ENCODE measurements at regions of chrX and their contacts with region 1.

Region 1: DNA sequence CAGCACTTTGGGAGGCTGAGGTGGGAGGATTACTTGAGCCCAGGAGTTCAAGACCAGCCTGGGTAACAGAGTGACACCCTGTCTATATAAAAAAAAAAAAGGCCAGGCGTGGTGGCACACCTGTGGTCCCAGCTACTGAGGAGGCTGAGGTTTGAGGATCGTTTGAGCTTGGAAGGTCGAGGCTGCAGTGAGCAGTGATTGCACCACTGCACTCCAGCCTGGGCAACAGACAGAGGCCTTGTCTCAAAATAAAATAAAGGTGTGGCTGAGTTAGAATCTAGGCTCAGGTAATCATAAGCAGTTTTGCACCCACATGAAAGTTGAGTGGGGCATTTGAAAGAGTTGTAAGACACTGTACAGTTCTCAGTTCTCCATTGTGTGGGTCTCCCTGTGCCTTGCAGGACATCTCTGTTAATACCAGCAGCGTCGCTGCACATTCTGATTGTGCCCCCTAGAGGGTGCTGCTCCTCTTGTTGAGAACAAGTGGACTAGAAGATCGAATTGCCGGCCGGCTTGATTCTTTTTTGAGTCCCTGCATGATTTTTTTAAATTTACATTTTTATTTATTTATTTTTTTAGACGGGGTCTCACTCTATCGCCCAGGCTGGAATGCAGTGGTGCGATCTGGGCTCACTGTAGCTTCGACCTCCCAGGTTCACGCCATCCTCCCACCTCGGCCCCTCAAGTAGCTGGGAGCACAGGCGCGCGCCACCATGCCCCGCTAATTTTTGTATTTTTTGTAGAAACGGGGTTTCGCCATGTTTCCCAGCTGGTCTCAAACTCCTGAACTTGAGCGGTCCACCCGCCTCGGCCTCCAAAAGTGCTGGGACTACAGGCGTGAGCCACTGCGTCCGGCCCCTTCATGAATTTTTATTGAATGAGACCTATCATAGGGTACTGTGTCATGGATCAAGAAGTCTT is 73.6 kb upstream of the RBMX start:
- DNase-seq: peak; percentile 25
- H3K4me3 Mint-ChIP-seq: no peak overlapping the region
- H3K27ac Mint-ChIP-seq: no peak overlapping the region
- H3K4me1 Mint-ChIP-seq: peaks cover 2% of the 10 kb centered on the region
- H3K27me3 Mint-ChIP-seq: no peaks in the 10 kb centered on the region

Region 2: DNA sequence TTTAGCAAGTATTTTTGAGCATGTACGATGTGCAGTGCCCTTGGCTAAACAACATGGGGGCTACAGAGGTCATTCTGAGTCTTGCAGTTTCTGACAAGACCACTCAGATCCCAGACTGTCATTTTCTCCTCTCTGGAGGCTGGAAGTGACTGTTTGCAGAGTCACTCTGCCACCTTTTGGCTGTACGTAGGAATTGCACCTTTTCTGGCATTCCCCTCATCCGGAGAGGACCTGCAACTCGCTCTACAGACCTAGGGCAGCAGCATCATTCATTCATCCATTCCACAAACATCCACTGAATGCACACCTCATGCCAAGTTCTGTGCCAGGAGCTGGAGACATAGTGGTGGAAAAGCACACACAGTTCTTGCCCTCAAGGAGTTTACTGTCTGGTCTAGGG is 240.0 kb after region 1 on chrX:
- intact Hi-C with region 1: loop called (anchors 2 kb)
- DNase-seq: no peak
- H3K4me3 Mint-ChIP-seq: no peak overlapping the region
- H3K27ac Mint-ChIP-seq: no peak overlapping the region
- H3K4me1 Mint-ChIP-seq: no peaks in the 10 kb centered on the region
- H3K27me3 Mint-ChIP-seq: peaks cover 8% of the 10 kb centered on the region

Region 3: DNA sequence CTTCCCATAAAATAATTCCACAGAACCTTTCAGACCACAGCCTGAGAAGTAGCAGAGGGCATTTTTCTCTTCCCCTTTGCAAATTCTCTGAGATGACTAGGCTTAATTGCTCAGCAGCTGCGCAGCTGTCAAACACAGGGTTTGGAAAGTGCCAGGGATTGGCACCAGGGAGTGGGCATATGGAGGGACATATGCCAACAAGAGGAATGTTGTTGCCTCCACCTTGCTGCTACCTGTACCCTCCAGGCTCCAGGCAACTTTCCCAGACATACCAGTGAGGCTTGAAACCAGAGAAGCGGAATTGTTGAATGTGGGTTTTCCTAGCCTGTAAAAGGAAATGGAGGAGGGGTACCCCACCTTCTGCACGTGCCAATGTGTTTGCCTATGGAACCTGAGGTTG is 335.9 kb after region 1 on chrX:
- intact Hi-C with region 1: no loop called
- DNase-seq: no peak
- H3K4me3 Mint-ChIP-seq: no peak overlapping the region
- H3K27ac Mint-ChIP-seq: no peak overlapping the region
- H3K4me1 Mint-ChIP-seq: no peaks in the 10 kb centered on the region
- H3K27me3 Mint-ChIP-seq: peaks cover 2% of the 10 kb centered on the region